ENCODE measurements at regions of chr3 and their contacts with region 1.

Region 1: DNA sequence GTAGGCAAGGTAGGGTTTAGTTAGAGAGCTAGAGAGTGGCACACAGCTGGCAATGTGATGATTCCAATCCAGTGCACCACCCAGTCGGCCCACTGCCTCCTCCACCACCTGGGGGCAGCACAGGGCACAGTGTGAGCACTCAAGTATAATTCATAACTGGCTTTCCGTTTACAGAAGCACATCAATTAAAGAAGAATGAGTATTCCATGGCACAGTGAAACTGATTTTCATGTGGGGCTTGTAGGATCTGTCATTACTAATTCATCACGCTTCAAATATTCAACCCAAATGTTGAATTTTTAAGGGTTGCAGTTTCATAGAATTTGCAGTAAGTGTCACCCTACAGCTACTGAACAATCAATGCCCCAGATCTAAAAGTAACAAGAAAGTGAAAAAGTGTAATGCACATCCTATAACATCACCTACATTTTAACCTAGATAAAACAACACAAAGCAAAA is 149.9 kb downstream of the IGSF11 start:
- DNase-seq: peak; percentile 57
- ATAC-seq: peak; percentile 78
- H3K4me3 ChIP-seq: no peak overlapping the region
- H3K4me3 Mint-ChIP-seq: no peak overlapping the region
- H3K27ac ChIP-seq: no peak overlapping the region
- H3K27ac Mint-ChIP-seq: no peak overlapping the region
- H3K4me1 ChIP-seq: no peaks in the 10 kb centered on the region
- H3K4me1 Mint-ChIP-seq: no peaks in the 10 kb centered on the region
- H3K27me3 ChIP-seq: peaks cover 0 to 3% (median 1%) of the 10 kb centered on the region in 4 experiments
- H3K27me3 Mint-ChIP-seq: peaks cover 28% of the 10 kb centered on the region
- CTCF ChIP-seq: peak; percentile 90

Region 2: GRCh38 chr3:118536764-118537163 is 348.0 kb before region 1 on chr3:
- CTCF ChIA-PET with region 1: no interaction called
- POLR2A ChIA-PET with region 1: no interaction called
- intact Hi-C with region 1: no loop called
- DNase-seq: no peak
- ATAC-seq: no peak
- H3K4me3 ChIP-seq: no peak overlapping the region
- H3K4me3 Mint-ChIP-seq: no peak overlapping the region
- H3K27ac ChIP-seq: no peak overlapping the region
- H3K27ac Mint-ChIP-seq: no peak overlapping the region
- H3K4me1 ChIP-seq: no peaks in the 10 kb centered on the region
- H3K4me1 Mint-ChIP-seq: no peaks in the 10 kb centered on the region
- H3K27me3 ChIP-seq: no peaks in the 10 kb centered on the region
- H3K27me3 Mint-ChIP-seq: no peaks in the 10 kb centered on the region
- CTCF ChIP-seq: no peak

Region 3: DNA sequence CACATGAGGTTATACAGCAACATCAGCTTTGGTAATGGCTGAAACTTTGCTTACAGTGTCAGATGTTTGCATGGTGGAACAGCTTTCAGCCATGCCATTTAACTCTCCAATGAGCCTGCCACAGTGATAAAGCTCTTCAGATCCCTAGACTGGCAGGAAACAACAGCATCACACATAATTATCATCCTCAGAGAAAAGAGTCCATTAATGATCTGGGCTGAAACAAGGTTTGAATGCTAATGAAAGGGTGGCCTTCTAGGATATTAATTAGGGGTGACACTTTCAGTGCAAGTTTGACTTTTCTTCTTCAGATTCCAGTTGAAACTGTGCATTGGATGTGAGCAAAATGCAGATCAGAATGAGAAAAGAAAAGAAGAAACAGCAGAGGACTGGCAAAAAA is 16.7 kb before region 1 on chr3:
- CTCF ChIA-PET with region 1: interaction called, 26 read pairs
- POLR2A ChIA-PET with region 1: no interaction called
- intact Hi-C with region 1: no loop called
- DNase-seq: no peak
- ATAC-seq: no peak
- H3K4me3 ChIP-seq: no peak overlapping the region
- H3K4me3 Mint-ChIP-seq: no peak overlapping the region
- H3K27ac ChIP-seq: no peak overlapping the region
- H3K27ac Mint-ChIP-seq: no peak overlapping the region
- H3K4me1 ChIP-seq: no peaks in the 10 kb centered on the region
- H3K4me1 Mint-ChIP-seq: no peaks in the 10 kb centered on the region
- H3K27me3 ChIP-seq: peaks cover 0 to 5% (median 0%) of the 10 kb centered on the region in 4 experiments
- H3K27me3 Mint-ChIP-seq: peaks cover 14% of the 10 kb centered on the region
- CTCF ChIP-seq: no peak

Region 4: GRCh38 chr3:119034256-119035013 is 149.7 kb after region 1 on chr3 and contains the start of gene IGSF11:
- CTCF ChIA-PET with region 1: interaction called, 39 read pairs
- POLR2A ChIA-PET with region 1: no interaction called
- intact Hi-C with region 1: loop called (anchors 5 kb)
- DNase-seq: peak; percentile 60
- ATAC-seq: peak; percentile 82
- H3K4me3 ChIP-seq: peak within 1 kb of the TSS in 4 of 5 experiments; percentile 37 to 54 (median 48)
- H3K4me3 Mint-ChIP-seq: peak within 1 kb of the TSS; percentile 82
- H3K27ac ChIP-seq: no peak within 1 kb of the TSS
- H3K27ac Mint-ChIP-seq: no peak within 1 kb of the TSS
- H3K4me1 ChIP-seq: peaks cover 4 to 6% of the 10 kb centered on the region in 2 donors
- H3K4me1 Mint-ChIP-seq: peaks cover 11% of the 10 kb centered on the region
- H3K27me3 ChIP-seq: peaks cover 0 to 34% (median 18%) of the 10 kb centered on the region in 4 experiments
- H3K27me3 Mint-ChIP-seq: peaks cover 50% of the 10 kb centered on the region
- CTCF ChIP-seq: peak; percentile 47
- total RNA-seq, gene IGSF11: not detected in 2 replicates

Region 5: DNA sequence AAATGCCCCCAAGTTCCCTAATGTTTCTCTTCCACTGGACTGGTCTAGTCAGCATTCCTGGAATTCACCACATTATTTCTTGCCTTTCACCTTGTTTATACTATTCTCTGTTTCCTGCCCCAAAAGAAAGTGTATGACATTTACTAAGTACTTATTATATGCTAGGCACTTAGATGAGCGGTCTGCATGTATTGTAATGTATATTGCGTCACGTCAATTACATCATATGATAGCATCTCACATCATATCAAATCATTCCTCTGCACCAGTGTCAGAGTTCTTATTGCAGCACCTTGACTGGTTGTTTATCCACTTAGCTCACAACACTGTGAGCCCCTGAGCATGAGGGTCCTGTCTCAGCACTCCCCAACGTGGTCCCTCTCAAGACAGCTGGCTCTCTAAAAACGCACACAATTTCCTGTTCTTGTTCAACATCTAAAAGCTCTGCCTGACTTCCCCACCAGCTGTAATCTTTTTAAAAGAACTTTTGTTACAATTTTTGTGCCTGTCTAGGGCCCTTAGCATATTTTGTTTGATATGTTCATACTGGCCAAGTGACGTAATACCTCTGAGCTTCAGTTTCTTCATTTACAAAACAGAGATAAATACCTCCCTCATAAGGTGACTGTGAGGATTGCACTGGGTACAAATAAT is 468.2 kb after region 1 on chr3:
- CTCF ChIA-PET with region 1: interaction called, 21 read pairs
- POLR2A ChIA-PET with region 1: no interaction called
- intact Hi-C with region 1: loop called (anchors 2 kb)
- DNase-seq: peak; percentile 63
- ATAC-seq: peak; percentile 35
- H3K4me3 ChIP-seq: no peak overlapping the region
- H3K4me3 Mint-ChIP-seq: peak overlapping the region; percentile 46
- H3K27ac ChIP-seq: peak overlapping the region in 1 of 2 donors; percentile 56
- H3K27ac Mint-ChIP-seq: peak overlapping the region; percentile 51
- H3K4me1 ChIP-seq: peaks cover 22 to 29% of the 10 kb centered on the region in 2 donors
- H3K4me1 Mint-ChIP-seq: peaks cover 36% of the 10 kb centered on the region
- H3K27me3 ChIP-seq: no peaks in the 10 kb centered on the region
- H3K27me3 Mint-ChIP-seq: no peaks in the 10 kb centered on the region
- CTCF ChIP-seq: peak; percentile 61

Region 6: GRCh38 chr3:119733812-119734211 is 849.0 kb after region 1 on chr3:
- CTCF ChIA-PET with region 1: no interaction called
- POLR2A ChIA-PET with region 1: no interaction called
- intact Hi-C with region 1: no loop called
- DNase-seq: no peak
- ATAC-seq: no peak
- H3K4me3 ChIP-seq: no peak overlapping the region
- H3K4me3 Mint-ChIP-seq: no peak overlapping the region
- H3K27ac ChIP-seq: no peak overlapping the region
- H3K27ac Mint-ChIP-seq: no peak overlapping the region
- H3K4me1 ChIP-seq: no peaks in the 10 kb centered on the region
- H3K4me1 Mint-ChIP-seq: no peaks in the 10 kb centered on the region
- H3K27me3 ChIP-seq: no peaks in the 10 kb centered on the region
- H3K27me3 Mint-ChIP-seq: no peaks in the 10 kb centered on the region
- CTCF ChIP-seq: no peak

Region 7: GRCh38 chr3:120791913-120792312 is 1907.1 kb after region 1 on chr3:
- CTCF ChIA-PET with region 1: no interaction called
- POLR2A ChIA-PET with region 1: no interaction called
- intact Hi-C with region 1: no loop called
- DNase-seq: no peak
- ATAC-seq: no peak
- H3K4me3 ChIP-seq: no peak overlapping the region
- H3K4me3 Mint-ChIP-seq: no peak overlapping the region
- H3K27ac ChIP-seq: no peak overlapping the region
- H3K27ac Mint-ChIP-seq: no peak overlapping the region
- H3K4me1 ChIP-seq: no peaks in the 10 kb centered on the region
- H3K4me1 Mint-ChIP-seq: no peaks in the 10 kb centered on the region
- H3K27me3 ChIP-seq: no peaks in the 10 kb centered on the region
- H3K27me3 Mint-ChIP-seq: no peaks in the 10 kb centered on the region
- CTCF ChIP-seq: no peak

Measured in B cell (primary cell).